ENCODE measurements at regions of chr10 and their contacts with region 1.

Region 1: GRCh38 chr10:50624866-50625692 is 1.3 kb upstream of the SGMS1 start:
- DNase-seq: peak; percentile 88
- H3K4me3 ChIP-seq: peak overlapping the region; percentile 88
- H3K27ac ChIP-seq: peak overlapping the region; percentile 96
- H3K4me1 ChIP-seq: peaks cover 32% of the 10 kb centered on the region
- CTCF ChIP-seq: peak; percentile 72

Region 2: GRCh38 chr10:50417886-50418830 is 206.9 kb before region 1 on chr10:
- CTCF ChIA-PET with region 1: no interaction called
- POLR2A ChIA-PET with region 1: interaction called, 4 read pairs
- intact Hi-C with region 1: loop called (anchors 5 kb)
- DNase-seq: peak; percentile 69
- H3K4me3 ChIP-seq: peak overlapping the region; percentile 70
- H3K27ac ChIP-seq: peak overlapping the region; percentile 7
- H3K4me1 ChIP-seq: peaks cover 33% of the 10 kb centered on the region
- CTCF ChIP-seq: 0 out of 2 replicates have a peak, but pooled peaks have one; percentile 25

Region 3: DNA sequence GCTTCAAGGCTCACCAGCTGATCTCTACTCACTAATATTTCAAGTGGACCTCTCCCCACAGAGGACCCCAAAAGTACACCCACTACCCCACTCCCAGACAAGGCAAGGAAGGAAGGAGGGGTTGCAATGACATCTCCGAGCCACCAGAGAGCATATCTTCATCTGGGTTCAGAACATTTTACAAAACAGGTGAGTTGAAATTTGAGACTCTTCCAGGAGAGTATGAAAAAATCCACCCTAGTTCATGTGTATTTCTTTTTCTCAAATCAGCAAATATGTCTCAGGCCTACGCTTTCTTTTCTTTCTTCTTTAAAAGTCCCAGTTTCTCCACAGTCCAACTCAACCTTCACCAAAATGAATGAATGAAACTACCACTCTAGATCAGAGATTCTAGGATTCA is 63.3 kb before region 1 on chr10:
- CTCF ChIA-PET with region 1: no interaction called
- POLR2A ChIA-PET with region 1: interaction called, 24 read pairs
- intact Hi-C with region 1: loop called (anchors 1 kb)
- DNase-seq: peak; percentile 54
- H3K4me3 ChIP-seq: no peak overlapping the region
- H3K27ac ChIP-seq: no peak overlapping the region
- H3K4me1 ChIP-seq: peaks cover 11% of the 10 kb centered on the region
- CTCF ChIP-seq: peak; percentile 94

Region 4: GRCh38 chr10:50645236-50645635 is 20.2 kb after region 1 on chr10:
- CTCF ChIA-PET with region 1: interaction called, 3 read pairs
- POLR2A ChIA-PET with region 1: interaction called, 213 read pairs
- intact Hi-C with region 1: loop called (anchors 1 kb)
- DNase-seq: no peak
- H3K4me3 ChIP-seq: peak overlapping the region; percentile 12
- H3K27ac ChIP-seq: peak overlapping the region; percentile 96
- H3K4me1 ChIP-seq: peaks cover 82% of the 10 kb centered on the region
- CTCF ChIP-seq: no peak

Region 5: DNA sequence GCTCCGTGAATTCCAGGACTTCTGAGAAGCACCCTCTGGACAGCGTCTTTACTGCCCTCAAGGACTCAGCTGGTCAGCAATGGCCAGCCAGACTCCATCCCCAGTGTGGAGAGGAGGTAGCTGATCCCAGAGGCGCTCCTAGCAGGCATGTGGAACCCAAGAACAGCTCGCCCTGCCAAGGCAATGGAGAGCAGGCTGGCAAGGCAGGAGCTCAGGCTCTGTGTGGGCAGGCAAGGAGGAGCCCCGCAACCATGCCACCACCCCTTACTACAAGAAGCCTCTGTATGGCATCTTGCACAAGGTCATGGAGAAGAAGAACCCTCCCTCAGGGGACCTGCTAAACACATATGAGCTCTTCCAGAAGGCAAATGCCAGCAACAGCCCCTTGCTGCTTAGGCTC is 33.1 kb after region 1 on chr10:
- CTCF ChIA-PET with region 1: interaction called, 9 read pairs
- POLR2A ChIA-PET with region 1: interaction called, 213 read pairs
- intact Hi-C with region 1: no loop called
- DNase-seq: no peak
- H3K4me3 ChIP-seq: peak overlapping the region; percentile 72
- H3K27ac ChIP-seq: peak overlapping the region; percentile 40
- H3K4me1 ChIP-seq: peaks cover 35% of the 10 kb centered on the region
- CTCF ChIP-seq: no peak

Region 6: GRCh38 chr10:50951365-50951764 is 326.3 kb after region 1 on chr10:
- CTCF ChIA-PET with region 1: no interaction called
- POLR2A ChIA-PET with region 1: no interaction called
- intact Hi-C with region 1: no loop called
- DNase-seq: no peak
- H3K4me3 ChIP-seq: no peak overlapping the region
- H3K27ac ChIP-seq: no peak overlapping the region
- H3K4me1 ChIP-seq: no peaks in the 10 kb centered on the region
- CTCF ChIP-seq: no peak